Activated CD4-positive, alpha-beta T cell treated with anti-CD3 and anti-CD28 coated beads, Interleukin-2, amount 10 ng/mL, durations not matched to agents 24 days and 14 days (primary cell): ENCODE measurements at regions of chr22 and their contacts with region 1.

Region 1: GRCh38 chr22:37623075-37624016 is 14.7 kb downstream of the GGA1 start:
- DNase-seq: peak; percentile 92
- H3K4me3 Mint-ChIP-seq: no peak overlapping the region
- H3K27ac Mint-ChIP-seq: peak overlapping the region; percentile 80
- H3K4me1 Mint-ChIP-seq: peaks cover 17% of the 10 kb centered on the region
- H3K27me3 Mint-ChIP-seq: no peaks in the 10 kb centered on the region

Region 2: DNA sequence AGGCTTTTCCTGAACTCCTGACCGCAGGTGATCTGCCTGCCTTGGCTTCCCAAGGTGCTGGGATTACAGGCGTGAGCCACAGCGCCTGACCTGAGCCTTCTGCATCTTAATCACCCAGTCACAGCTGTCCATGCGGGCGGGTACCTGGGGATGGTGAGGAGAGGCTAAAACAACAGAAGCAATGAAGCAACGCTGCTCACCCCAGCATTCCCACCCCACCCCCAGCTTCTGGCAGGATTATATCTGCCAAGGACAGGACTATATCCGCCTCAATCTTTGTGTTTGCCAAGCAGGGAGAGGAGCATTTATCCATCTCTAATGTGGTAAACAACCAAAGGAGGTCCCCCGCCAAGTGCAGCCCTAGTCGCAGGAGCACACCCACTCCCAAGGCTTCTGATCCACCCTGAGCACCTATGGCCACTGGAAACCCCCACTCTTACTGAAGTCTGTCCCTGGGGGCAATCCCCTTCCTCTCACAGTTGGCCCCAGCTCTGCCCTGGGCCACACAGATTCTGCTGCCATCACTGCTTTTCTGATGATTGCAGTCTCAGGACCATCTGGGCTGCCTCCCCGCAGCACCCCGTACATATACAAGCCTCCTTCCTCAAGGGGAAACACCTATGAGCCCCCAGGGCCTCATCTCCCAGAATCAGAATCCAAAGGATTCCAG is 34.7 kb before region 1 on chr22:
- intact Hi-C with region 1: no loop called
- DNase-seq: no peak
- H3K4me3 Mint-ChIP-seq: no peak overlapping the region
- H3K27ac Mint-ChIP-seq: no peak overlapping the region
- H3K4me1 Mint-ChIP-seq: peaks cover 10% of the 10 kb centered on the region
- H3K27me3 Mint-ChIP-seq: peaks cover 8% of the 10 kb centered on the region

Region 3: DNA sequence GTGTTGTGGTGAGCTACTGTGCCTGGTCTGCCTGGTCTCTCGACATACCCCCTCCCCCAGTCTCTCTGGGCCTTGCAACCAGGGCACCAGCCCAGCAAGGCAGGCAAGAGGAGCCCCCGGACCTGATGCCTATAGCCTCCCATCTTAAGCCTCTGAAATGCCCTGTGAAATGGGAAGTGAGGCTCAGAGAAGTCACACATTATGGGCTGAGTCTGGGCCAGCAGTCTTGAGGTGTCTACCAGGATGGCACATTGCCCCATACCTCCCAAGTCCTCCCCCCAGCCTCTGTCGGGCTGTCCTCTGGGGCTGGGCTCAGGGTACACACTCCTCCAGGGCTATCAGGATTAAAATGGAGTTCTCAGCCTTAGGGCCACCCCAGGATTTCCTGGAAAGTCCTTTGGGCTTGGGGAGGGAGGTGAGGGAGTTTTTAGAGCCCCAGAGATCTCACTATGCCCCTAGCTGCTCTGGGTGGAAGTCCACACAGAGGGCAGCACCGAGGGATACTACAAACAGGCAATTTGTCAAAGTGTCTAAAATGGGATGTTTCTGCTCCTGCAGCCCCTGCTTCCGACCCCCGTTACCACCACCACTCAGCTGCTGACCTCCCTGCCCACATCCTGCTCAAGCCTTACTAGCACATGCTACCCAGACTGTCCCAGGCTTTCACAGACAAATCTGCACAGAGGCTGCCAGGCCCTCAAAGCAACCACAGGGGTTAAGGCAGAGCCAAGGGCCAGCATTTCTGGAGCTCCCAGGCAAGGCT is 13.0 kb after region 1 on chr22:
- intact Hi-C with region 1: loop called (anchors 1 kb)
- DNase-seq: peak; percentile 79
- H3K4me3 Mint-ChIP-seq: peak overlapping the region; percentile 17
- H3K27ac Mint-ChIP-seq: peak overlapping the region; percentile 80
- H3K4me1 Mint-ChIP-seq: peaks cover 61% of the 10 kb centered on the region
- H3K27me3 Mint-ChIP-seq: no peaks in the 10 kb centered on the region

Region 4: DNA sequence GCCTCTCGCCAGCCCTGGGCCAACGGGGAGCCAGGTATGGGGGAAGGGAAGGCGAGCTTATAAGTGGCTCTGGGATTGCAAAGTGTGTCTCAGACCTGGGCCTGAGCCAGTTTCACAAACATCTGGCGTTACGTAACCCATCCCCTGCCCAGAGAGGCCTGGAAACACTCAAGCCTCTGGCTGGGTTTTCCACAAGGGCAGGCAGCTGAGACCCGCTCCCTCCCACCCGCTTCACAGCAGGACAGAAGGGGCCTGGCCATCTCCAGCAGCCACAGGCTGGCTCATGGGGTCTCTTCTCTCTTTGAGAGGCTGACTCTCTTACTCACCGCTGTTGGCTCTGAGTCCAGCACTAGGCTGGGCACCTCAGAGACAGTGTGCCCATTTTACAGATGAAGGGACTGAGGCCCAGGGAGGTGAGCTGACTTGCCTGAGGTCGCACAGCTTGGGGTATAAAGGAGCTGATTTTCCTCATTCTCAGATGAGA is 118.0 kb after region 1 on chr22:
- intact Hi-C with region 1: no loop called
- DNase-seq: no peak
- H3K4me3 Mint-ChIP-seq: no peak overlapping the region
- H3K27ac Mint-ChIP-seq: no peak overlapping the region
- H3K4me1 Mint-ChIP-seq: peaks cover 26% of the 10 kb centered on the region
- H3K27me3 Mint-ChIP-seq: no peaks in the 10 kb centered on the region

Region 5: GRCh38 chr22:37752466-37753087 is 129.2 kb after region 1 on chr22:
- intact Hi-C with region 1: no loop called
- DNase-seq: no peak
- H3K4me3 Mint-ChIP-seq: no peak overlapping the region
- H3K27ac Mint-ChIP-seq: no peak overlapping the region
- H3K4me1 Mint-ChIP-seq: peaks cover 6% of the 10 kb centered on the region
- H3K27me3 Mint-ChIP-seq: no peaks in the 10 kb centered on the region

Region 6: GRCh38 chr22:37843741-37843990 is 220.3 kb after region 1 on chr22:
- intact Hi-C with region 1: no loop called
- DNase-seq: peak; percentile 89
- H3K4me3 Mint-ChIP-seq: peak overlapping the region; percentile 93
- H3K27ac Mint-ChIP-seq: peak overlapping the region; percentile 92
- H3K4me1 Mint-ChIP-seq: peaks cover 26% of the 10 kb centered on the region
- H3K27me3 Mint-ChIP-seq: no peaks in the 10 kb centered on the region